ENCODE measurements at regions of chr2 and their contacts with region 1.

Region 1: DNA sequence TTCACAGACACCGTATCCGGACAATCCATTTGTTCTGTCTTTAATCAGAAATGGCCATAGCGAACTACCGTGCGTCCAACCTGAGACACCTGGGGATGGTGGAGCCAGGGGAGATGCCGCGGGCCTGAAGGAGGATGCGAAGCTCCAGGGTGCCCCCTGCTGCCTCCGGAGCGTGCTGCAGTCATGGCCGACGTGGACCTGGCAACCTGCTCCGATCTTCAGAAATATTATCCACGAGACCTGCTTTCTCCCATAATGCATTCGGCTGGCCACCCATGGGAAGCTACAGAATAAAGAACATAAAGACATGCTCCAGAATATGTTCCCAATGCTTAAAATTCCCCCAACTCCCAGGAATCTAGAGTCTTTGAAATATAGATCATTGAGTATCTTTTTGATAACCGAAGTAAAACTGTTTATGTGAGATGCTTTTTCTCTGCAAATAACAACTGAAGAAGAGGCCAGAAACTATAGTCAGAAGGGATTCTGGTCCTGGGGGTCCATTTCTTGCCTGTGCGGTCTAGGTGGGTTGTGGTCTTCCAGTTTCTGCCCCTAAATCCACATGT is 30.7 kb upstream of the SLC66A3 start:
- DNase-seq: peak; percentile 76 to 85
- H3K4me3 ChIP-seq: no peak overlapping the region
- H3K27ac ChIP-seq: no peak overlapping the region
- H3K4me1 ChIP-seq: peaks cover 4 to 20% (median 12%) of the 10 kb centered on the region in 4 donors
- H3K27me3 ChIP-seq: peaks cover 0 to 11% (median 0%) of the 10 kb centered on the region in 3 donors
- CTCF ChIP-seq: peak in 5 of 7 experiments; percentile 60 to 64 (median 63)
- EP300 ChIP-seq: no peak
- POLR2A ChIP-seq: no peak

Region 2: DNA sequence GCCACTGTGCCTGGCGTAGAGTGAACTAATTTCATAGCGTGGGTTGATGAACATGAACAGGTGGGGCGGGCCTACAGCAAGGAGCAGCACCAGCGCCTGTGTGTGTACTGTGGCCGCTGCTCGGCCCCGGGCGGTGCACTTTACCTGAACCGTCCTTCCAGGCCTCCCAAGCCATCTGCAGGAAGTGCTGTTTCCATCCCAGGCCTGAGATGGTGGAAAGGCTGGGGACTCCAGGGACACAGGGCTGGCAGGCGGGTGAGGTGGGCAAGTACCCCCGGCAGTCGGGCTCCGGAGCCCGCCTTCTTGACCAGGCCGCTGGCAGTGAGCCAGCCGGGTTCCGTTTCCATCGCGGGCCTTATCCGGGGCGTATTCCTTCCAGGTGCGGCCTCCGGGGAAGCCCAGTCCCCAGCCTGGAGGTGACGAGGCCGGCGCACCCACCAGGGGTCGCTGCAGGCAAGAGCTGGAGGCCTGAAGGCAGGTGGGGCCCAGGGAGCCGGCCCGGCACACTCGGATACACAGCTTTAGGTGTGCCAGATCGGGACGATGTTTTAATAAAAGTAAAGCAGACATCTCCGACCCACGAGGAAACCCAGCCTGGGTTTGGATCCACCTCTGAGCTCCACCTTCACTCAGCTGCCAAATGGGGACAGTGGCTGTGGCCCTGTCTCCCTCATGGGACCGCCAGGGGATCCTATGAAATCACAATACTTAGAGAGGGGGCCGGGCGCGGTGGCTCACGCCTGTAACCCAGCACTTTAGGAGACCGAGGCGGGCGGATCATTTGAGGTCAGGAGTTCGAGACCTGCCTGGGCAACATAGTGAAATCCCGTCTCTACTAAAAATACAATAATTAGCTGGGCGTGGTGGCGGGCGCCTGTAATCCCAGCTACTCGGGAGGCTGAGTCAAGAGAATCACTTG is 289.3 kb before region 1 on chr2:
- intact Hi-C with region 1: loop called (anchors 5 kb)
- DNase-seq: peak; percentile 91
- H3K4me3 ChIP-seq: no peak overlapping the region
- H3K27ac ChIP-seq: peak overlapping the region in 1 of 5 donors; percentile 6
- H3K4me1 ChIP-seq: peaks cover 4 to 32% (median 19%) of the 10 kb centered on the region in 4 donors
- H3K27me3 ChIP-seq: peaks cover 0 to 57% (median 0%) of the 10 kb centered on the region in 3 donors
- CTCF ChIP-seq: peak in 5 of 7 experiments; percentile 80 to 94 (median 89)
- EP300 ChIP-seq: no peak
- POLR2A ChIP-seq: no peak

Region 3: DNA sequence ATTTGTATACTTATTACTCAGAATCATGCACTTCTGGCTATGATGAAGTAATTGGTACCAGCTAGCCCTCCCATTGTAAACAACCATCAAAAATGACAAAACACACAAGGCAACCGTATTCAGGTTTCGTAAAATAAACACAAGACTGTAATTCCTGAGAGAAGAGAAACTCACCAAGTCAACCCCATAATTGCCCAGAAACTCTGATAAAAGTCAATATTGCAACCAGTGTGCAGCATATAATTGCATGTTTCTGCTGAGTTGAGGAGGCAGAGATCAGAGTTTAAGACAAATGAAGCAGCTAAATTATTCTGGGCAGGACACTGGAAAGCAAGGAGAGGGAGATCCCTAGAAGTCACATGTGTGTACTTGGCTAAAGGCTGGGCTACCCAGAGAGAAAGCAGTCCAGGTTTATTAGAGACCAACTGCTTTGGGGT is 129.5 kb after region 1 on chr2:
- intact Hi-C with region 1: no loop called
- DNase-seq: peak in 1 of 2 donors; percentile 33
- H3K4me3 ChIP-seq: no peak overlapping the region
- H3K27ac ChIP-seq: no peak overlapping the region
- H3K4me1 ChIP-seq: peaks cover 0 to 28% (median 17%) of the 10 kb centered on the region in 4 donors
- H3K27me3 ChIP-seq: no peaks in the 10 kb centered on the region
- CTCF ChIP-seq: no peak
- EP300 ChIP-seq: no peak
- POLR2A ChIP-seq: no peak